ENCODE measurements at regions of chr10 and their contacts with region 1.

Region 1: DNA sequence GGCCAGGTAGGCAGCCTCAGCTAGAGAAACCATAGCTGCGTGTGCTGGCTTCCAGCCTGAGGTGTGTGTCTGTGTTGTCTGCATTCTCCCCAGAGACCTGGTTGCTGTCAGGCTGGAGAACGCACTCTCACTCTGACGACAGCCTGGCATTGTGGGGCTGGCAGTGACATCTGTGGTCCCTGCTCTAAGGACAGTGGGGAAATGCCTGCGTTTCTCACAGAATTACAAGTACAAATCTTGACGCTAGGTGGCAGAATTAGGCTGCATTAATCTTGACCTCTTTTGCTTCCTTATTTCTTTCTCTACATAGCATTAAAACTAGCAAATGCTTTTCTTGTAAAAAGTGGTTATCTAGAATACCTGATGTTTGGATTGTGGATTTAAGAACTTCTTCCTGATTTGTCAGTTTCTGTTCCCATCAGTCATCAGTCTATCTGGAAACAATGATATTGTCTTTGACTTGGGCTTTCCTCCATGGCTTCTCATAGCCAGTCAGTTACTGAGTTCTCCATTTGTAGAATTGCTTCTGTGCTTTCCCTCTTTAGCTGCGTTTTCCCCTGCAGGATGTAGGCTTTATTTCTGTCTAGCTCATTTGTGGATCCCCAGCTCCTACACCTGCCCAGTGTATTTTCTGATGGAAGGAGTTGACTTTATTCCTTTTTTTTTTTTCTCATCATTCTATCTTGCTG is 86.0 kb downstream of the FANK1 start:
- ATAC-seq: peak; percentile 70 to 92 (median 88)
- H3K4me3 ChIP-seq: no peak overlapping the region
- H3K27ac ChIP-seq: no peak overlapping the region
- H3K4me1 ChIP-seq: peaks cover 15 to 19% of the 10 kb centered on the region in 2 donors

Region 2: DNA sequence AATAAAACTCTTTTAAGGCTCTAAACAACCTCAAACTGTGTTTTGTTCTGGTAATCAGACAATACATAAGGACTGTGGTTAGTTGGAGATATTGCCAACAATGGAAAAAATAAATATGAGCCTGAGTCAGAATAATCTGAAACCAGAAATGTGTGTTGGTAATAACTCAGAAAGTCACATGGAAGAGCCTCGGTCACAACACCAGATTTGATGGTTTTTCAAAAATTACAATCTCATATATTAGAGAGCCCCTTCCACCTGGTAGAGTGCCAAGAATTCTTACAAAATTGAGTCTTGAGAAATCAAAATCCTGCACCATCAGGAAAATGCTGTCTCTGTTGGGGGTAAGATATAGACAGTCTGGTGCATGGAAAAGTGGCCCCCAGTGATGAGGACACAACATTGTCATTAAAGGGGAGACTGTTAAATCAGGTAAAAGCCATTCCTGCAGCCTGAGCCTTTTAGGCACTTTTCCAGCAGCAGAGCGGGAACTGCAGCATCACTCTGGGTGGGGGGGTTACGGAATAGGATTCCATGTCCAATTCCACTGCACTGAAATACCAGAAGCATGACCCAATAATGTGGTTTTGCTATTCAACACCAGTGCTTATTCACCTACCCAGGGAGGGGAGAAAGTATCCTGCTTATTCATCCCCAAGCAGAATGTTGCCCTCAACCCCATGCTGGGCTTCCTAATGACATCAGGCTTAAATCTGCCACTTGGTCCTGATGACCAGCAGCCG is 415.4 kb after region 1 on chr10:
- in situ Hi-C with region 1: loop called in 2 of 9 experiments (anchors 10 to 25 kb)
- ATAC-seq: peak in 7 of 8 experiments; percentile 63 to 92 (median 89)
- H3K4me3 ChIP-seq: no peak overlapping the region
- H3K27ac ChIP-seq: no peak overlapping the region
- H3K4me1 ChIP-seq: peaks cover 12 to 24% of the 10 kb centered on the region in 2 donors

Region 3: DNA sequence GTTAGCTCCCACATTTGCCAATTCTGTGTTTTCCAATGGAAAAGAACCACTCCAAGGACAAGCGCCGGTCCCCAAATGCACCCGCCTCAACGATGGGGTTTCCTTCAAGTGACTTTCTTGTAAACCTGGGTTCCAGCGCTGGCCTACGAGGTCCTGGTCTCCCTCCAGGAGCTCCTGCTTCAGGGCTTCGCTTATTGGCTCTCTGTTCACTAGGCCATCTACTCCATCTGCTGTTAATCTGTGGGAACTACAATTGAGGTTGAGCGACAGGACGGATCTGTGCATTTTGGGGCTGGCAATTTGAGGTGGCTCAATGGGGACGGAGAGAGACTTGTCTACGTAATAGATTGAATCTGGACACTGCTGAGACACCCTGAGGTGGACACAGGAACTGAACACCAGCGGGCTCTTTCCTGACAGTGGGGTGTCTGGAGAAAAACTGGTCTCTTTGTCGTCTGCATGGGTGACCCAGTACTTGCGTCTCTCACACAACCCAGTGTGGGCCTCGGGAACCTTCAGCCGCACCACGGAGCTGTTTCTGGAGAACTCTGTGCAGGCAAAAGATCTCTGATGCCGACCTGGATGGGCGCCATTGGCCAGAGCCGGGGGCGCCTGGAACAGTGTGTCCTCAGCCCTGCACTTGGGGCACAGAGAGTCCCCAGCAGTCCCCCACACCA is 521.8 kb after region 1 on chr10:
- in situ Hi-C with region 1: loop called in 2 of 9 experiments (anchors 25 kb)
- ATAC-seq: peak; percentile 48 to 91 (median 74)
- H3K4me3 ChIP-seq: no peak overlapping the region
- H3K27ac ChIP-seq: no peak overlapping the region
- H3K4me1 ChIP-seq: no peaks in the 10 kb centered on the region

Region 4: DNA sequence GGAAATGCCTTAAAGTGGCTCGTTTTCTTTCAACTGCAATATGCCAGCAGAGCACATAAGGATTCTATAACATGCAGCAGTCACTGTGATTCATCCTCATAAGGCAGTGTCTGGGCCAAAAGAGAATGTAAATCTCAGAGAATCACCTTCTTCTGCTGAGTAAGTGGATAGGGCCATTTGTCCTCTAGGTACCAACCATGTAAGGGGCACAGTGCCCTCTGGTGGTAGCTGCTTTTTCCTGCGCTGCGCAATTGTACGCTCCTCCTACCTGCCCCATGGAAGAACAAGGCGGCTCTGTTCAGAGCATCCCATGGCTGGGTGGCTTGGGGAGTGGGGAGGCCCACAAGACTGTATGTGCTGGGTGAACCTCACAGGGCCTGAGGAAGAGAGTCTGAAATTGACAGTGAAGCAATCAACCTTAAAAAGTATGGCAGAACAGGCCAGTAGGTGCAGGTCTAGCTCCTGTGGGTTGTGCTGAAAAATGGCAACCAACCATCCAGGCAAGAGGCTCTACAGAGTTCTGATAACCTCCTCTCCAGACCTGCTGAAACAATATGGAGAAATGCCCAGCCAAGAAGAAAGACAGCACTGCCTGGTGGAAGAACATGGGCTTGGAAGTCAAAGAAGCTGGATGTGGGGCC is 766.7 kb after region 1 on chr10:
- in situ Hi-C with region 1: loop called in 1 of 9 experiments (anchors 25 kb)
- ATAC-seq: peak; percentile 92 to 100 (median 96)
- H3K4me3 ChIP-seq: no peak overlapping the region
- H3K27ac ChIP-seq: peak overlapping the region in 1 of 2 donors; percentile 35
- H3K4me1 ChIP-seq: peaks cover 20 to 22% of the 10 kb centered on the region in 2 donors